ENCODE measurements at regions of chr10 and their contacts with region 1.

Region 1: GRCh38 chr10:23994479-23995046 is 214.4 kb upstream of the KIAA1217 start:
- DNase-seq: peak; percentile 60
- ATAC-seq: no peak
- H3K4me3 Mint-ChIP-seq: no peak overlapping the region
- H3K27ac Mint-ChIP-seq: no peak overlapping the region
- H3K4me1 Mint-ChIP-seq: no peaks in the 10 kb centered on the region
- H3K27me3 Mint-ChIP-seq: peaks cover 2% of the 10 kb centered on the region

Region 2: DNA sequence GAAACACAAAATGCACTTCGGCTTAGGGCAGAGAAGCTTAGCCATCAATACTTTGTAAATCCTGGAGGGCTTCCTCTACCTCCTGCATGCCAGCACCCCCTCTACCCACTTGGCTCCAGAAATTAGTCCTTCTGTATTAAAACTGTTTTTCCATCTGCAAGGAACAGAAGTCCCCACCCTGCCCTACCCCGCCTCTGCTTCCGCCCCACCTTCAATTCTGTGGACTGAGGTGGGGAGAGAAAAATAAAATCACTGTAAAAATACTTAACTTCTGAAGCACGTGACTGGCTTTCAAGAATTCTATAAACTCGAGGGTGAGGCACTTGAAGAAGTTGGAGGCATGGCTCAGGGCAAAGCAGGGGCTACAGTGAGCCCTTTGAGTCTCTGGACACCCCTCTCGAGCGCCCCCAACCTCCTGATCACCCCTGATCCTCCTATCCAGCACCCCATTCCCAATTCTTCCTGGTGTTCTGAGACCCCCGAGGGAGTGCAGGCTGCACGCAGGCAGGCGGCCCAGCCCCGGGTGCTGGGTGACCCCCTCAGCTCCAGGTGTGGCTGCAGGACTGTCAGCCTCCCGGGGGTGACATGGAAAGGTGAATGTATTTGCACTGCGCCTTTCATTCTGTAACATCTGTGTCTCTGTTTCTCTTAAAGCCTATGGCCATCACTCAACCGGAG is 207.1 kb after region 1 on chr10:
- CTCF ChIA-PET with region 1: no interaction called
- POLR2A ChIA-PET with region 1: no interaction called
- intact Hi-C with region 1: loop called (anchors 1 kb)
- DNase-seq: no peak
- ATAC-seq: no peak
- H3K4me3 Mint-ChIP-seq: no peak overlapping the region
- H3K27ac Mint-ChIP-seq: no peak overlapping the region
- H3K4me1 Mint-ChIP-seq: peaks cover 8% of the 10 kb centered on the region
- H3K27me3 Mint-ChIP-seq: peaks cover 20% of the 10 kb centered on the region

Region 3: DNA sequence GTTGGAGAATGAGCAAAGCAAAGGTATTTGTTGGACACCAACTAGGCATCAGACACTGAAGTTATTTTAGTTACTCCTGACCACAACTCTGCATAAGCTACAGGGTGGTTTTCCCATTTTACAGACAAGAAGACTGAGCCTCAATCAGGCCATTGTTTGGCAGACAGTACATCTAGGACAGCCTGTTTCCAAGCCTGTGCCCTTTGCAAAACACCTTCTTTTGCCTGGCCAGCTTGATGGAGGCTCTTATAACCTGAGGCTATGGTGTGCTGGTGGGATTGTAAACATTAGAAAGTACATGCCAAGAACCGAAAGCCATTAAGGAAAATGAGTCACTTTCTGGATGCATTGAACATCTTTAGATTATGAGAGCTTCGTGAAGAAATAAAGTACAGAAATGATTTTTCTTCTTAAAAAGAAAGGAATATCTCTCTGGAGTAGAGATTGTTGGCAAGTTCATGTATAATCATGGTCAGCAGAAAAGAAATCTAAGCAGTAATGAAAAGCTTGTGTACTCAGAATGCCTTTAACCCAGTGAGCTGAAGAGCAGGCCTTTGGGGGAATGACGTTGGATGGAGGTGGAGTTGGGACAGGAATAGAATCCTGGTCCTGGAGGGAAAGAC is 354.9 kb after region 1 on chr10:
- CTCF ChIA-PET with region 1: no interaction called
- POLR2A ChIA-PET with region 1: no interaction called
- intact Hi-C with region 1: loop called in 1 of 2 experiments (anchors 10 kb)
- DNase-seq: no peak
- ATAC-seq: no peak
- H3K4me3 Mint-ChIP-seq: no peak overlapping the region
- H3K27ac Mint-ChIP-seq: no peak overlapping the region
- H3K4me1 Mint-ChIP-seq: no peaks in the 10 kb centered on the region
- H3K27me3 Mint-ChIP-seq: peaks cover 5% of the 10 kb centered on the region

Region 4: DNA sequence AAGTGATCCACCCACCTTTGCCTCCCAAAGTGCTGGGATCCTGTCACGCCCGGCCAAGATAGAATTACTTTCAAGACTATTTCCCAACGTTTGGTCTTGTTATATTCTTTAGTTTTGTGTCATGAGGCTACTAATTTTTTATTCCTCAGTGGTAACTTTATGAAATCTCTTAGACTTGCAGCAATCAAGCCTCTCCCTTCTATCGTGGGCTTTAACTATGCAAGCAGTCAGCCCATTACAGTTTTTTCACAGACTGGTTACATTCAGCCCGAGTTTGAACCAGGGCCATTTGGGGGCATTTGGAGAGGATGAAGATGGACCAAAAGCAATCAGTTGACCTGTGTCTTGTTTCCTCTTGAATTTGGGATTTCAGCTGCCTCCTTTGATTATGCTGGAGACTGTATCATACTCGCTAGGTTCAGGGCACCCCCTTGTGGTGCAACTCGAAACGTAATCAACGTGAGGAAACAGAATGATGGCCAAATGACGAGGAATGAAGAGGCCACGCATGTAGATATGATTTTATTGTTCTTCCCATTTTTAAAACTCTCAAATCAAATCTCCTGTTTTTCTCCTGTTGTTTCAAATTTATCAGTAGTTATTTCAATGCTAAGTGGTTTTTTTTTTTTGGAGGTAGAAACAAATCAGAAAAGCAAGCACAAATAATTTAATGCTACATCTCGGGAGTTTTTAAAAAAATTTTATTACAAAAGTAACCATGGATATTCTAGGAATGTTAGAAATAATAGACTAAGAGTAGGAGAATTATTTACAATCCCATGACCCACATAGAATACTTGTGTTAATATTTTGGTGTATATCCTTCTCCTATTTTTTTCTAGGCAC is 365.9 kb after region 1 on chr10:
- CTCF ChIA-PET with region 1: interaction called, 3 read pairs
- POLR2A ChIA-PET with region 1: no interaction called
- intact Hi-C with region 1: loop called (anchors 1 to 10 kb)
- DNase-seq: peak; percentile 71
- ATAC-seq: no peak
- H3K4me3 Mint-ChIP-seq: no peak overlapping the region
- H3K27ac Mint-ChIP-seq: no peak overlapping the region
- H3K4me1 Mint-ChIP-seq: no peaks in the 10 kb centered on the region
- H3K27me3 Mint-ChIP-seq: peaks cover 5% of the 10 kb centered on the region

Region 5: GRCh38 chr10:24503461-24504320 is 509.1 kb after region 1 on chr10:
- CTCF ChIA-PET with region 1: interaction called, 3 read pairs
- POLR2A ChIA-PET with region 1: no interaction called
- intact Hi-C with region 1: loop called in 1 of 2 experiments (anchors 1 kb)
- DNase-seq: peak; percentile 63
- ATAC-seq: peak; percentile 57
- H3K4me3 Mint-ChIP-seq: no peak overlapping the region
- H3K27ac Mint-ChIP-seq: no peak overlapping the region
- H3K4me1 Mint-ChIP-seq: no peaks in the 10 kb centered on the region
- H3K27me3 Mint-ChIP-seq: peaks cover 14% of the 10 kb centered on the region

Region 6: GRCh38 chr10:24556750-24557742 is 562.5 kb after region 1 on chr10:
- CTCF ChIA-PET with region 1: no interaction called
- POLR2A ChIA-PET with region 1: no interaction called
- intact Hi-C with region 1: loop called in 1 of 2 experiments (anchors 2 kb)
- DNase-seq: peak; percentile 56
- ATAC-seq: peak; percentile 83
- H3K4me3 Mint-ChIP-seq: no peak overlapping the region
- H3K27ac Mint-ChIP-seq: no peak overlapping the region
- H3K4me1 Mint-ChIP-seq: peaks cover 4% of the 10 kb centered on the region
- H3K27me3 Mint-ChIP-seq: peaks cover 2% of the 10 kb centered on the region

Region 7: DNA sequence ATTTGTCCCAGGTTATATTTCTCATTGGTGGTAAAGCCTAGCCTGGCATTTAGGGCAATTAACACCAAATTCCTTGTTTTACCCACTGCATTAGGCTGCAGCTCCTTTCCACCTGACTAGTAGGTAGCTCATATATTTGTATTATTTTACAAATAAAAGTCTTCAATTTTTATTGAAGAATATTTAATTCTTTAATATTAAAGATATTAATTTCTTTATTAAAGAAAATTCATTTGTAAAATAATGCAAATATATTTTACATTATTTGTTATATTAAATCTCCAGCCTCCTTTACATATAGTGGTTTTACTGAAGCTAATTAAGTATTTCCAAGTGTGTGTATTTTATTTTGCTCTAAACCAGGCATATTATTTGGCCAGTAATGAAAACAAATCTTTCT is 1541.5 kb after region 1 on chr10:
- CTCF ChIA-PET with region 1: no interaction called
- POLR2A ChIA-PET with region 1: no interaction called
- intact Hi-C with region 1: no loop called
- DNase-seq: no peak
- ATAC-seq: no peak
- H3K4me3 Mint-ChIP-seq: no peak overlapping the region
- H3K27ac Mint-ChIP-seq: no peak overlapping the region
- H3K4me1 Mint-ChIP-seq: no peaks in the 10 kb centered on the region
- H3K27me3 Mint-ChIP-seq: no peaks in the 10 kb centered on the region

Measured in activated CD4-positive, alpha-beta T cell treated with anti-CD3 and anti-CD28 coated beads for 36 hours (primary cell).